Activated B cell treated with CpG ODN at 0.5 μM for 24 hours (primary cell): ENCODE measurements at regions of chr10 and their contacts with region 1.

Region 1: GRCh38 chr10:71314028-71314693 is 4.9 kb upstream of the SLC29A3 start:
- DNase-seq: peak; percentile 29
- ATAC-seq: peak; percentile 40
- H3K4me3 Mint-ChIP-seq: no peak overlapping the region
- H3K27ac Mint-ChIP-seq: no peak overlapping the region
- H3K4me1 Mint-ChIP-seq: peaks cover 15% of the 10 kb centered on the region
- H3K27me3 Mint-ChIP-seq: peaks cover 10% of the 10 kb centered on the region
- CTCF ChIP-seq: no peak

Region 2: DNA sequence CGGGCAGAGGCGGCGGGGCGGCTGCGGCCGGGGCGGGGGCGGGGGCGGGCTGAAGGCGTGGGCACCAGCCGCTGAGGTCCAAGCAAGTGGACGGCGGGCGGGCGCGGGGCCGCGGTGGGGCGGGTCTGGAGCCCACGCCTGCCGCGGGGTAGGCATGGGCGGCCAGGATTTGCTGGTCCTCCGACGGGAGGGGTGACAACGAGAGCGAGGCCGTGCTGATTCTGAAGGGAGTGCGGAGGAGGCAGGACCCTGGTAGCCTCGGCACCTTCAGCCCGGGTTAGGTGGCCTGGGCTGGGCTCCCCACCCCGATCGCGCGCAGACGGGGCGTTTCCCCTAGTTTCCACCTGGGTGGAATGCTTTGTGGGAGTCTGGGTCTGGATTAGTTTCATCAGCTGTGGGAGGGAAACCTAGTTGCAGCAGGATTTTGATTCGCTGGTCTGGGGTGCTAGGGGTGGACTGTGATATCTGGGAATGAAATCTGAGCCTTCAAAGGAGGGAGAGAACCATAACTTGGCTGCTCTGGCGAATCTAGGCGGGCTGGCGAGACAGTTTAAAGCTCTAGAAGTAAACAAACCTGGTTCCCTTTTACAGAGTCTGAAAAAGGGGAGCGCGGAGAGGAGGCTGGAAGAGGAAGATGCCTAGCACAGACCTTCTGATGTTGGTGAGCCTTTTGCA is 497.8 kb before region 1 on chr10:
- CTCF ChIA-PET with region 1: no interaction called
- POLR2A ChIA-PET with region 1: no interaction called
- intact Hi-C with region 1: no loop called
- DNase-seq: no peak
- ATAC-seq: peak; percentile 54
- H3K4me3 Mint-ChIP-seq: peak overlapping the region; percentile 90
- H3K27ac Mint-ChIP-seq: peak overlapping the region; percentile 82
- H3K4me1 Mint-ChIP-seq: peaks cover 26% of the 10 kb centered on the region
- H3K27me3 Mint-ChIP-seq: peaks cover 2% of the 10 kb centered on the region
- CTCF ChIP-seq: no peak

Region 3: DNA sequence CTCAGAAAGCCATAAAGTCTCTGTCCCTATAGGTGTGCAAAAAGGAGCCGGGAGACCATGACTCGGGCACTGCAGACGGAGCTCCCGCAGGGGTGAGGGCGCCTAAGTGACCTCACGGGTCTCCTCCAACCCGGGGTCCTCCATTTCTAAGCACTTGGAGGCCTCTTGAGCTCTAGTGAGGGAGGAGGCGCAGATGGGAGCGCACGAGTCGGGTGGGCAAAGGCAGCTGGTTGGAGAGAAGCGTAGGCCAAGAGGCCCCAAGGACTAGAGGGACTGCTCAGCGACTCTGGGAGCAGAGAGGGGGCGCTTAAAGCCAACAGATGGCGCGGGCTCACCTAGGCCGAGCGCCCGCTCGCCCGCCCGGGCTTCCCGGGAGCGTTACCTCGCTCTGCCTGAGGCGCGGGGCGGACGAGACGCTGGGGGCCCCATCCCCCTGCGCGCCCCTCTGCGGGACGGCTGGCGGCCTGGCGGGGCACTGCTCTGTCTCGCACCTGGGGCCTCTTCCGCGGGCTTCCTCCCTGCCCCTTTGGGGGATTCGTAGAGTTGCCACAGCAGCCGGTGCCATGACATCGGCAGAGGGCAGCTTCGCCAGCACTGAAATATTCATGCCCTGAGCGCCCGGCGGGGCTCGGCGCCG is 82.0 kb after region 1 on chr10:
- CTCF ChIA-PET with region 1: interaction called, 4 read pairs
- POLR2A ChIA-PET with region 1: interaction called, 9 read pairs
- intact Hi-C with region 1: loop called (anchors 1 kb)
- DNase-seq: peak; percentile 54
- ATAC-seq: peak; percentile 71
- H3K4me3 Mint-ChIP-seq: peak overlapping the region; percentile 78
- H3K27ac Mint-ChIP-seq: no peak overlapping the region
- H3K4me1 Mint-ChIP-seq: peaks cover 8% of the 10 kb centered on the region
- H3K27me3 Mint-ChIP-seq: peaks cover 52% of the 10 kb centered on the region
- CTCF ChIP-seq: no peak

Region 4: GRCh38 chr10:71569775-71570588 is 255.8 kb after region 1 on chr10:
- CTCF ChIA-PET with region 1: interaction called, 109 read pairs
- POLR2A ChIA-PET with region 1: interaction called, 3 read pairs
- intact Hi-C with region 1: loop called (anchors 1 kb)
- DNase-seq: peak; percentile 62
- ATAC-seq: peak; percentile 67
- H3K4me3 Mint-ChIP-seq: no peak overlapping the region
- H3K27ac Mint-ChIP-seq: no peak overlapping the region
- H3K4me1 Mint-ChIP-seq: no peaks in the 10 kb centered on the region
- H3K27me3 Mint-ChIP-seq: peaks cover 5% of the 10 kb centered on the region
- CTCF ChIP-seq: no peak

Region 5: DNA sequence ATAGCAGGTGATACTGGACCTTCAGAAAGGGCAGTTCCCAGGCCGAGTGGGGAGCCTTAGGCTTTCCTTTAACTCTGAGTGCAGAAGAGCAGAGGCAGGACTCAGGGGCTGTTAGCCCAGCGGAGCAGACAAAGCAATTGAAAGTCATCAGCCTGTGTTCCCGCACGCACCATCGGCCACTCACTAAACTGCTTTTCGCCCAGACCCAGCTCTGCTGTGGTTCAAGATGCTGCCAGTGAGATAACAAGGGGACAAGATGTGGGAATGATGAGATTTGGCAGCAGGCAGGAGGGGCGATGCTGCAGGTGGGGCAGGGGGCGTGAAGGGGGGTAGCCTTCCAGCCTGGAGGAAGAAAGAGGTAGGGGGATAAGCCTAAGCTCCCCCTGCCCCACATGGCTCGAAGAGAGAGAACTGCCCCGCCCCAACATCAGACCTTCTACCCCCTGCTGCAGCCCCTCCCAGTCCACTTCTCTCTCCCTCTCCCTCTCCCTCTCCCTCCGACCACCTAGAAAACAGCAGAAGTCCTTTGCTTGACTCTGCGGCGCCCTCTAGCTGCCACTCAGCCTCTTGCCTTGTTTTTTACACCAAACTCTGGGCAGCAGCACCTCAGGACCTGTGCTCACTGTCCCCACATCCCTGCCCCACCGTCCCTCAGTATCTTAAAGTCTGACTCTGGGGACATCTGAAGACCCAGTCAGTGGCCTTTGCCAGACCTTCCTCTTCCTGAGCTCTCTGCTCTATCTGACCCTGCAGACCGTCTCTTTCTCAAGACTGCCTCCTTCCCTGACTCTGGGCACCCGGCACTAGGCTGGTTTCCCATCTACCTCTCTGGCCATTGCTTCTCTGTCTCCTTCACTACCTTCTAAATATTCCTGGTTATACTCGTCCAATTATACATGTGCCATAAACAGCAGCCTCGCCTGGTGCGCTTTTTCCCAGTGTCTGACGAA is 294.9 kb after region 1 on chr10:
- CTCF ChIA-PET with region 1: interaction called, 26 read pairs
- POLR2A ChIA-PET with region 1: interaction called, 3 read pairs
- intact Hi-C with region 1: loop called (anchors 1 kb)
- DNase-seq: peak; percentile 48
- ATAC-seq: no peak
- H3K4me3 Mint-ChIP-seq: no peak overlapping the region
- H3K27ac Mint-ChIP-seq: no peak overlapping the region
- H3K4me1 Mint-ChIP-seq: no peaks in the 10 kb centered on the region
- H3K27me3 Mint-ChIP-seq: peaks cover 3% of the 10 kb centered on the region
- CTCF ChIP-seq: no peak

Region 6: GRCh38 chr10:71696628-71697326 is 382.6 kb after region 1 on chr10:
- CTCF ChIA-PET with region 1: interaction called, 12 read pairs
- POLR2A ChIA-PET with region 1: interaction called, 9 read pairs
- intact Hi-C with region 1: loop called (anchors 1 kb)
- DNase-seq: peak; percentile 59
- ATAC-seq: no peak
- H3K4me3 Mint-ChIP-seq: no peak overlapping the region
- H3K27ac Mint-ChIP-seq: no peak overlapping the region
- H3K4me1 Mint-ChIP-seq: peaks cover 63% of the 10 kb centered on the region
- H3K27me3 Mint-ChIP-seq: no peaks in the 10 kb centered on the region
- CTCF ChIP-seq: peak; percentile 27

Region 7: DNA sequence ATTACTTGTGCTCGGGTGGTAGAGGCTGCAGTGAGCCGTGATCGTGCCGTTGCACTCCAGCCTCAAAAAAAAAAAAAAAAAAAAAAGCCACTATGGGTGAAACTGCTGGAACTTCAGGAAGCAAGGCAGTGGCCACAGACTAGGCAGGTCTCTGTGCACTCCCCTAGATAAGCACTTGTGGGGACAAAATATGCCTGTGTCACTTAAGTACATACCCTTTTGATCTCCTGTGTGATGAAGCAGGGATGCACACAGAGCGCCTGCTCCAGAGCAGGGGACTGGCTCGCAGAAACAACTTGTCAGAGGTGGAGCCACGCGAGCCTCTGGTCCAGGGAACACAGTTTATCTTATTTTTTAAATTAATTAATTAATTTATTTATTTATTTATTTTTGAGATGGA is 579.8 kb after region 1 on chr10:
- CTCF ChIA-PET with region 1: interaction called, 13 read pairs
- POLR2A ChIA-PET with region 1: no interaction called
- intact Hi-C with region 1: loop called (anchors 1 kb)
- DNase-seq: no peak
- ATAC-seq: no peak
- H3K4me3 Mint-ChIP-seq: no peak overlapping the region
- H3K27ac Mint-ChIP-seq: no peak overlapping the region
- H3K4me1 Mint-ChIP-seq: peaks cover 20% of the 10 kb centered on the region
- H3K27me3 Mint-ChIP-seq: peaks cover 2% of the 10 kb centered on the region
- CTCF ChIP-seq: no peak

Region 8: DNA sequence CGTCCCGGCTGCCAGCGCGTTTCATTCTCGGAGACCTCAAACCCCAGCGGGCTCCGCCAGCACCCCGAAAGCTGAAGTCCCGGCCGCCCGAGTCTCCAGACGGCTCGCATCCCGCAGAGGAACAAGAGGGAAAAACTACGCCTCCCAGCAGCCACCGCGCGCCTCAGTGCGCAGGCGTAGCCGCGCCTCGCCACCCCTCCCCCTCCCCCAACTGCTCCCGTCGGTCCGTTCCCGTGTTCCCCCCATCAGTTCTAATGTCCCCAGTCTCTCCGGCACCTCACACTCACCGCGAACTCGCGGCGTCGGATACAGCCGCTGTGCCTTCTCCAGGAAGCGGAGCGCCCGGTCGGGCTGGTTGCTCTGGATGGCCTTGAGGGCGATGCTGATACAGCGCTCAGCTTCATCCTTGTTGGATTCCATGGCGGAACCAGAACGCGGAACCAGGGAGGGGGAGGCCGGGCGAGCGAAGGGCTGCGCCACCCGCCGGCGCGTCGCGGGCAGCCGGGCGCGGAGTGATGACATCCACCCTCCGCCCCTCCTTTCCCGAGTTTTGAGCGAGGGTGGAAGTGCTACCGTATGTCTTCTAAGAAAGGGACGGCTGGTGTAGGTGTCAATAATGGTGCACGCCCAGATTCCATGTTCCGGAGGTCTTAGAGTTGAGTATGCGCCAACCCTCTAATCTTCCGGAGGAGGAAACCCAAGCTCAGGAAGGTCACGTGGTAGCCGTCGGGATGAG is 1040.5 kb after region 1 on chr10 and contains the start of gene DNAJB12:
- CTCF ChIA-PET with region 1: no interaction called
- POLR2A ChIA-PET with region 1: no interaction called
- intact Hi-C with region 1: no loop called
- DNase-seq: peak; percentile 89
- ATAC-seq: peak; percentile 84
- H3K4me3 Mint-ChIP-seq: peak within 1 kb of the TSS; percentile 99
- H3K27ac Mint-ChIP-seq: peak within 1 kb of the TSS; percentile 99
- H3K4me1 Mint-ChIP-seq: peaks cover 35% of the 10 kb centered on the region
- H3K27me3 Mint-ChIP-seq: no peaks in the 10 kb centered on the region
- CTCF ChIP-seq: no peak
- total RNA-seq, gene DNAJB12: 39.0 and 39.9 TPM in 2 replicates